ENCODE measurements at regions of chr11 and their contacts with region 1.

Region 1: GRCh38 chr11:62394825-62395538 is 23.9 kb upstream of the SCGB1A1 start:
- DNase-seq: peak in 8 of 9 experiments; percentile 34 to 82 (median 49)
- ATAC-seq: peak; percentile 75
- H3K4me3 ChIP-seq: no peak overlapping the region
- H3K4me3 Mint-ChIP-seq: no peak overlapping the region
- H3K27ac ChIP-seq: no peak overlapping the region
- H3K27ac Mint-ChIP-seq: no peak overlapping the region
- H3K4me1 ChIP-seq: peaks cover 20% of the 10 kb centered on the region
- H3K4me1 Mint-ChIP-seq: peaks cover 32% of the 10 kb centered on the region
- H3K27me3 ChIP-seq: no peaks in the 10 kb centered on the region
- H3K27me3 Mint-ChIP-seq: no peaks in the 10 kb centered on the region
- CTCF ChIP-seq: peak; percentile 66

Region 2: GRCh38 chr11:62383822-62384221 is 11.2 kb before region 1 on chr11:
- CTCF ChIA-PET with region 1: interaction called, 14 read pairs
- POLR2A ChIA-PET with region 1: no interaction called
- intact Hi-C with region 1: loop called (anchors 1 kb)
- DNase-seq: no peak
- ATAC-seq: no peak
- H3K4me3 ChIP-seq: no peak overlapping the region
- H3K4me3 Mint-ChIP-seq: no peak overlapping the region
- H3K27ac ChIP-seq: no peak overlapping the region
- H3K27ac Mint-ChIP-seq: no peak overlapping the region
- H3K4me1 ChIP-seq: peaks cover 9% of the 10 kb centered on the region
- H3K4me1 Mint-ChIP-seq: peaks cover 9% of the 10 kb centered on the region
- H3K27me3 ChIP-seq: no peaks in the 10 kb centered on the region
- H3K27me3 Mint-ChIP-seq: no peaks in the 10 kb centered on the region
- CTCF ChIP-seq: no peak

Region 3: GRCh38 chr11:62427630-62428233 is 32.8 kb after region 1 on chr11:
- CTCF ChIA-PET with region 1: interaction called, 66 read pairs
- POLR2A ChIA-PET with region 1: interaction called, 3 read pairs
- intact Hi-C with region 1: no loop called
- DNase-seq: no peak
- ATAC-seq: no peak
- H3K4me3 ChIP-seq: no peak overlapping the region
- H3K4me3 Mint-ChIP-seq: no peak overlapping the region
- H3K27ac ChIP-seq: no peak overlapping the region
- H3K27ac Mint-ChIP-seq: peak overlapping the region; percentile 82
- H3K4me1 ChIP-seq: peaks cover 37% of the 10 kb centered on the region
- H3K4me1 Mint-ChIP-seq: peaks cover 44% of the 10 kb centered on the region
- H3K27me3 ChIP-seq: no peaks in the 10 kb centered on the region
- H3K27me3 Mint-ChIP-seq: no peaks in the 10 kb centered on the region
- CTCF ChIP-seq: no peak

Region 4: DNA sequence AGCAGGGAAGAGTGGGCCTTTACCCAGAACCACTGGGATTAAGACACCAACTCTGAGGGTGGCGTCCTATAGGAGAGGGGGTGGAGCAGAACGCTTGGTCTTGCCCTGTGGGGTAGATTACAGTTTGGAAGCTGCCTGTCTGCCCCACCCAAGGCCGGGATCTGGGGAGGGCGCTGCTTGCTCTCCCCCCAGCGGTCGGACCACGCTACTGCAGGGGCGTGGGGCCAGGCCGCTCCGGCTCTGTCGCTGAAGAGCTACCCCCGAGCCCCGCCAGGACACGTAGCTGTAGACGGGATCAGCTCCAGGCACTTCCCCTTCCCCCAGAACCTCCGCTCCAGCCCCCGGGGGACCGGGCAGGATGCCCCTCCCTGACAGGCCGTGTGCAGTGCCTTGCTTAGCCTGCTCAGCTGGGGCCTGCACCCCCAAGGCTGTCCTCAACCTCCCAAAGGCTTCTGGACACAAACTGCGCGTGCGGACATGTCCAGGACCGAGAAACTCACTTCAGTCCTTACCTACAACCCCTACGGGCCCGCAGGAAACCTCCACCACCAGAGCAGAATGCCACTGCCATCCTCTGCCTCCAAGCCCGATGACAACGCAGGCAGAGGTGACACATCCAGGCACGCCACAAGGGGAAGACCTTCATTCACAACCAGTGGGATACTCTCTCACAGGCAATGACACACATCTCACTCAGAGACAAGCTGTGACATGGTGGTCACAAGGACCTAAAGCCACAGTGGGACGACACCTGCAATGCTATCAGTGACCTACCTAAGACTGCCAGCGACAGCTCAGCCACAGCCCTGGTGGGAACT is 148.0 kb after region 1 on chr11:
- CTCF ChIA-PET with region 1: interaction called, 38 read pairs
- POLR2A ChIA-PET with region 1: no interaction called
- intact Hi-C with region 1: loop called in 1 of 2 experiments (anchors 1 kb)
- DNase-seq: peak in 8 of 9 experiments; percentile 60 to 91 (median 76)
- ATAC-seq: peak; percentile 64
- H3K4me3 ChIP-seq: peak overlapping the region; percentile 52 to 74
- H3K4me3 Mint-ChIP-seq: peak overlapping the region; percentile 94
- H3K27ac ChIP-seq: peak overlapping the region; percentile 79 to 85
- H3K27ac Mint-ChIP-seq: peak overlapping the region; percentile 93
- H3K4me1 ChIP-seq: peaks cover 84% of the 10 kb centered on the region
- H3K4me1 Mint-ChIP-seq: peaks cover 73% of the 10 kb centered on the region
- H3K27me3 ChIP-seq: no peaks in the 10 kb centered on the region
- H3K27me3 Mint-ChIP-seq: no peaks in the 10 kb centered on the region
- CTCF ChIP-seq: peak; percentile 94

Region 5: DNA sequence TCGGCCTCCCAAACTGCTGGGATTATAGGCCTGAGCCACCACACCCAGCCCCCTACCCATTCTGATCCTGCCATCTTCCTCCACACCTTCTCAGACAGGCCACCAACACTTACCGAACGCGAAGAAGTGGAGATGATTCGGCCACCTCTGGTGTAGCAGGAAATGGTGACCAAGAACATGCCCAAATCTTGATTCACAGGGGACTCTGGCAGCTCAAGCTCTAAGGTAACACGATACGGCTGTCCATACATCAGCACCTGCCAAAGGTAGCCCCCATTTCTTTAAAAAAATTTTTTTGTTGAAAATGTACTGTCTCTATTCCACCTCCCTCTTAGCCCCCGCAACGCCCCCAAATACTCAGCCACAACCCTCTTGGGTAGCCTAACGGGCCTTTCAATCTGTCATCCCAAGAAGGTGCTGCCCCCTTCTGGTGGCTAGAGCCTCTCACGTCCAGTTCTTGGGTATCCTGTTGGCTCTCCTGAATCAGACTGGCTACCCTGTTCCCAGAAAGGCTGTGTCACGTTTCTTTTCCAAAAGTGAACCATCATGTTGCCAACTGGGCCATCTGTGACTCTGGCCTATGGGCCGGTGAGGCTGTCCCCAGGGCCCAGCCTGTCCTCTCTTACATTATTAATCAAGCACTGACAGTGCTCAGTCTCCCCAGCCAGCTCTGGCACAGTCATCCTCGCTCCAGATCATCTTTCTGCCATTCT is 299.6 kb after region 1 on chr11:
- CTCF ChIA-PET with region 1: interaction called, 6 read pairs
- POLR2A ChIA-PET with region 1: no interaction called
- intact Hi-C with region 1: loop called in 1 of 2 experiments (anchors 1 kb)
- DNase-seq: peak; percentile 57 to 88 (median 81)
- ATAC-seq: peak; percentile 91
- H3K4me3 ChIP-seq: no peak overlapping the region
- H3K4me3 Mint-ChIP-seq: no peak overlapping the region
- H3K27ac ChIP-seq: no peak overlapping the region
- H3K27ac Mint-ChIP-seq: no peak overlapping the region
- H3K4me1 ChIP-seq: peaks cover 6% of the 10 kb centered on the region
- H3K4me1 Mint-ChIP-seq: peaks cover 3% of the 10 kb centered on the region
- H3K27me3 ChIP-seq: no peaks in the 10 kb centered on the region
- H3K27me3 Mint-ChIP-seq: no peaks in the 10 kb centered on the region
- CTCF ChIP-seq: peak; percentile 79

Measured in CD8-positive, alpha-beta T cell (primary cell).